ENCODE measurements at regions of chr1 and their contacts with region 1.

Region 1: GRCh38 chr1:206734499-206735142 is 36.0 kb upstream of the IL19 start:
- DNase-seq: peak; percentile 51

Region 2: DNA sequence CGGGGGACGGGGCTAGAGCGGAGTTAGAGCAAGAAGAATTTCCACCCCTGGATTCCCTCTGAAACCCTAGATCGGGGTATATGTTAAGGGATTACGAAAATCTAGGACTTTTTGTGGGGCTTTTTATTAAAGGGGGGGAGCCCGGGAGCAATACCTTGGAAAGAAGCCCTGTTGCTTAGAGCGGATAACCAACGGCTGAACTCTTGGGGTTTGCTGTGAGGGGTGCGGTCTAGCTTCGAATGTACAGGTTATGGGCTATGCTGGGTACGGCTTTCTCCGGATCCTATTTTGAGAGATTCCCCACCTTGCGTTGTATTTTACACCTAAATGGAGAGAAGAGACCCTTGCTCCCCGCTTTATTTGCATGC is 98.7 kb before region 1 on chr1:
- in situ Hi-C with region 1: no loop called
- DNase-seq: peak; percentile 20

Region 3: GRCh38 chr1:206912445-206913095 is 177.9 kb after region 1 on chr1:
- in situ Hi-C with region 1: loop called (anchors 25 kb)
- DNase-seq: peak; percentile 78

Measured in KBM-7 (cell line).